ENCODE measurements at regions of chr6 and their contacts with region 1.

Region 1: GRCh38 chr6:47242483-47243386 is 67.0 kb downstream of the TNFRSF21 start:
- DNase-seq: peak; percentile 95 to 98 (median 98)
- H3K4me3 ChIP-seq: peak overlapping the region in 1 of 3 experiments; percentile 53
- H3K4me3 Mint-ChIP-seq: peak overlapping the region in 1 of 2 donors; percentile 67
- H3K27ac ChIP-seq: peak overlapping the region; percentile 44 to 87
- H3K27ac Mint-ChIP-seq: peak overlapping the region; percentile 82 to 95 (median 92)
- H3K4me1 ChIP-seq: peaks cover 42 to 52% of the 10 kb centered on the region in 2 donors
- H3K4me1 Mint-ChIP-seq: peaks cover 54% of the 10 kb centered on the region
- H3K27me3 ChIP-seq: no peaks in the 10 kb centered on the region
- H3K27me3 Mint-ChIP-seq: no peaks in the 10 kb centered on the region
- CTCF ChIP-seq: no peak

Region 2: DNA sequence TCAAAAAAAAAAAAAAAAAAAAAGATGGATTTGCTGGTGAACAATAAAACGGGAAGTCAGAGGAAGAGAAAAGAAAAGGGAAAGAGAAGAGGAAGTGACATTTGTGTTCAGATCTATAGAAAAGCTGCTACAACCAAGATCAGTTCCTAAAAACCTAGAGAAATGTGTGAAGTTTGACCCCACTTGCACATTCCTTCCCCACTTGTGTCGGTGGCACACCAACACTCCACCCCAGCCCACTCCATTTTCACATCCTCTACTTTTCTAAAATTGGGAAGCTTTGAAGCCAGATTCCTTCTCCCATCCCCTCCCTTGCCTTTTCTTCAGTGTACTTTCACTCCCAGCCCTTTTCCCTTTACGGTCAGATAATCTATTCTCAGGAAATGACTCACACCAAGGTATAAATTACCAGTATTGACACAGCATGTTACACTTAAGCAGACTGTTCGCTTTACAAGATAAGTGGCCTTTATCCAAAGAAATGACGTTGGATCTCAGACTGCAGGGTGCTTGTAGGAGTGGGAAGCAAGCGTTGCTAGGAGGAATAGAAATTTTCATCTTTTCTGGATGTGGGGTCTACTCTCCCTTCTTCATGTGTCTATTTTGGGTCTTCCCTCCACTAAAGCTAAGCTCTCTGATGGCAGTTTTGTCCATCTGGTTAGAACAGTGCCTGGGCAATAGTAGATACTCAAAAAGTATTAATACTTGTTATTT is 108.1 kb before region 1 on chr6:
- intact Hi-C with region 1: loop called in 1 of 2 experiments (anchors 10 kb)
- DNase-seq: peak; percentile 28 to 69 (median 67)
- H3K4me3 ChIP-seq: peak overlapping the region in 1 of 3 experiments; percentile 40
- H3K4me3 Mint-ChIP-seq: peak overlapping the region; percentile 52 to 74
- H3K27ac ChIP-seq: peak overlapping the region in 1 of 2 donors; percentile 63
- H3K27ac Mint-ChIP-seq: peak overlapping the region; percentile 78 to 97 (median 93)
- H3K4me1 ChIP-seq: peaks cover 21 to 22% of the 10 kb centered on the region in 2 donors
- H3K4me1 Mint-ChIP-seq: peaks cover 20% of the 10 kb centered on the region
- H3K27me3 ChIP-seq: no peaks in the 10 kb centered on the region
- H3K27me3 Mint-ChIP-seq: peaks cover 0 to 3% (median 1%) of the 10 kb centered on the region in 3 donors
- CTCF ChIP-seq: no peak

Region 3: GRCh38 chr6:47203266-47203937 is 39.3 kb before region 1 on chr6:
- intact Hi-C with region 1: no loop called
- DNase-seq: peak; percentile 48 to 84 (median 52)
- H3K4me3 ChIP-seq: no peak overlapping the region
- H3K4me3 Mint-ChIP-seq: no peak overlapping the region
- H3K27ac ChIP-seq: peak overlapping the region; percentile 12 to 52
- H3K27ac Mint-ChIP-seq: peak overlapping the region; percentile 73 to 90 (median 79)
- H3K4me1 ChIP-seq: peaks cover 0 to 5% of the 10 kb centered on the region in 2 donors
- H3K4me1 Mint-ChIP-seq: peaks cover 17% of the 10 kb centered on the region
- H3K27me3 ChIP-seq: no peaks in the 10 kb centered on the region
- H3K27me3 Mint-ChIP-seq: peaks cover 0 to 2% (median 0%) of the 10 kb centered on the region in 3 donors
- CTCF ChIP-seq: no peak

Measured in CD14-positive monocyte (primary cell).